ENCODE measurements at regions of chr2 and their contacts with region 1.

Region 1: GRCh38 chr2:158667586-158667985 is 127.5 kb upstream of the DAPL1 start:
- DNase-seq: no peak
- ATAC-seq: peak; percentile 56 to 86
- H3K4me3 ChIP-seq: no peak overlapping the region
- H3K27ac ChIP-seq: peak overlapping the region; percentile 61
- H3K4me1 ChIP-seq: peaks cover 19% of the 10 kb centered on the region
- H3K27me3 ChIP-seq: no peaks in the 10 kb centered on the region

Region 2: DNA sequence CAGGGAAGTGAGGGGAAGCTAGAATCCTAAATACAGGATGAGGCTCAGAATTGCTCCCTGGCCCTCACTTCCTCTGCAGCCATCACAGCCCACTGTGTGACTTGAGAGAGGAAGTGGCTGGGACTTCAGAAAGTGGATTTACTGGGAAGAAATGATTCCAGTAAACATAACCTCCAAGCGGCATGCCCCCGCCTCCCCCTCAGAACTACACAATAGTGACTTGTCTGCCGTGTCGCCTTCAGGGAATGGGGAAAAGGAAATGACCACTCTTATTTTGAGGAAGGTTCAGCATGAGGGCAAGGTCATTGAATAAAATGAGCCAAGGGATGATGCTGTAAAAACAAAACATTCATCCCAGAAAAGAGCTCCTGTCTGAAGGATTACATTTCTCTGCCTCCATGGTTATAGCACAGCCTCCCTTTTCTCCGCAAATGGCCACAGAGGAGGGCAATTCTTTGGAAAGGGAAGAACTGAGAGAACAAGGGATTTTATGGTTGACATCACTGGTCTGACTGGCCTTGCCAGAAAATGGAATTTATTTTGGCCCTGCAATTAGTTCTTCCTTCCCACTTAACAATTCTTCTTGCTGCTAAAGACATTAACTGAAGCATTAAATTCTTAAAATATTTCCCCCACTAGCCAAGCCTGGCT is 48.7 kb after region 1 on chr2:
- intact Hi-C with region 1: loop called in 1 of 4 experiments (anchors 5 kb)
- DNase-seq: peak; percentile 59 to 83 (median 79)
- ATAC-seq: peak; percentile 83 to 94
- H3K4me3 ChIP-seq: no peak overlapping the region
- H3K27ac ChIP-seq: peak overlapping the region; percentile 14
- H3K4me1 ChIP-seq: peaks cover 7% of the 10 kb centered on the region
- H3K27me3 ChIP-seq: no peaks in the 10 kb centered on the region

Measured in right cardiac atrium (tissue), 5 donors.